Ascending aorta (tissue), 2 donors: ENCODE measurements at regions of chr9 and their contacts with region 1.

Region 1: GRCh38 chr9:69672596-69673310 is 582 bp upstream of the APBA1 start:
- DNase-seq: peak; percentile 11 to 89
- H3K4me3 ChIP-seq: peak overlapping the region; percentile 76 to 95
- H3K27ac ChIP-seq: peak overlapping the region; percentile 9 to 82
- H3K4me1 ChIP-seq: peaks cover 0 to 11% of the 10 kb centered on the region in 2 donors
- H3K27me3 ChIP-seq: no peaks in the 10 kb centered on the region
- CTCF ChIP-seq: peak; percentile 66 to 88 (median 88)

Region 2: DNA sequence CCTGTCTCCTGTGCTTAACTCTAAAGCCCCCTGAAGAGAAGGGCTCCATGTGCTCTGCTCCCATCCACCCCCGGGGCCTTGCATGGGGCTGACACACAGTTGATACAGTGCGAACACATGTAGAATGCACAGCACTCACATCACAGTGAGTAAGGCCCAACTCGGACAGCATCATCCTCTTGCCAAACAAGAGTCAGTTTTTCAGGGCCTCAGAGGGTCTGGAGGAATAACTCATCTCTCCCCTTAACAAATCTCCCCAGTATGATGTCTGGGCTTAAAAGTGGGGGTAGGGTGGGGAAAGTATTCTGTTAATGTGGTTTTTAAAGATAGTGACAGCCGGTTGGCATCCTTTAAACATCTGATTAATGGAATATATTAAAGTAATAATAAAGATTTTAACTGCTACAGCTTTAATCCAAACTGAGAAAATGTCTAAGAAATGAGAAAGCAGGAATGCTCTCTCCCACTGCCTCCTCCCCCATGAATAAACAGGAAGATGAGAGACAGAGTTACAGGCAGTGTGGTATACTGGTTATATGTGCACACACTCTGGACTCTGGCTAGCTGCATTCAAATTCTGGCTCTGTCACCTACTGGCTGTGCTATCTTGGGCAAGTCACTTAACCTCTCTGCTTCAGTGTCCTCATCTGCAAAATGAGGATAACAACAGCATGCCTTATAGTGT is 23.0 kb before region 1 on chr9:
- intact Hi-C with region 1: no loop called
- DNase-seq: no peak
- H3K4me3 ChIP-seq: no peak overlapping the region
- H3K27ac ChIP-seq: no peak overlapping the region
- H3K4me1 ChIP-seq: no peaks in the 10 kb centered on the region
- H3K27me3 ChIP-seq: no peaks in the 10 kb centered on the region
- CTCF ChIP-seq: no peak

Region 3: GRCh38 chr9:69759421-69760277 is 86.9 kb after region 1 on chr9 and contains the start of gene PTAR1:
- intact Hi-C with region 1: loop called (anchors 1 kb)
- DNase-seq: peak; percentile 50 to 94
- H3K4me3 ChIP-seq: peak within 1 kb of the TSS; percentile 92 to 97
- H3K27ac ChIP-seq: peak within 1 kb of the TSS; percentile 97 to 98
- H3K4me1 ChIP-seq: peaks cover 2 to 10% of the 10 kb centered on the region in 2 donors
- H3K27me3 ChIP-seq: no peaks in the 10 kb centered on the region
- CTCF ChIP-seq: no peak
- total RNA-seq, gene PTAR1: 13.3 TPM

Region 4: DNA sequence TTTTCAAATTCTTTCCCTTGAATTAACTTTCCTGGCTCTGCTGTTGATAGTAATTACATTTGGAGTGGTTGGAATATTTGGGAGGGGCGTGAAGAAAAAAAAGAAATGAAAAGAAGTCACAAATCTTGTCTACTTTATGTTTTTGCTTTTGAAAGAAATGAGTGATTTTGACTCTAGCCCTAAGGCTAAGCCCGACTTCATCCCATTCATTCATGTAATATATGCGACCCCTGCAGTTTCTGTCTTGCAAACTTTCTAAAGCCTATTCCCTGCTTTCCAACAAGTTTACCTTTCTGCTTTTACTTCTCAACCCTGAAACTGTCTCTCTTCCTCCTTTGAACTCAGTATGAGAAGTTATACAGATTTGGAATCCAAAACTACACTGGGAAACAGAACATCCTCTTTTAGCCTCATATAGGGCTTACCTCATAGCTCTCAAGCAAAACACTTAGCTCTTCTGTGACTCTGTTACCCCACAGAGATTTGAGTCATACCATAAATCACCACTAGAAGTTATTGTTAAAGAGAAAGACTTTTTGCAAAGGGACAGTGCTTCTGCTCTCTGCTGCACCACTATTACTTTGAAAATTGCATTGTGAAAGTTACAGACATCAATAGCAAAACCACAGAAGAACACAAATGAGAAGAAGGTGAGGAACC is 149.5 kb after region 1 on chr9:
- intact Hi-C with region 1: no loop called
- DNase-seq: no peak
- H3K4me3 ChIP-seq: no peak overlapping the region
- H3K27ac ChIP-seq: no peak overlapping the region
- H3K4me1 ChIP-seq: no peaks in the 10 kb centered on the region
- H3K27me3 ChIP-seq: peaks cover 6% of the 10 kb centered on the region
- CTCF ChIP-seq: no peak

Region 5: GRCh38 chr9:69835277-69836080 is 162.7 kb after region 1 on chr9:
- intact Hi-C with region 1: no loop called
- DNase-seq: no peak
- H3K4me3 ChIP-seq: no peak overlapping the region
- H3K27ac ChIP-seq: no peak overlapping the region
- H3K4me1 ChIP-seq: no peaks in the 10 kb centered on the region
- H3K27me3 ChIP-seq: no peaks in the 10 kb centered on the region
- CTCF ChIP-seq: no peak